Left cardiac atrium (tissue), 4 donors: ENCODE measurements at regions of chr1 and their contacts with region 1.

Region 1: GRCh38 chr1:11847667-11848372 is at the start of gene NPPA:
- DNase-seq: peak; percentile 91
- ATAC-seq: peak; percentile 60 to 64
- total RNA-seq, gene NPPA: 22,081 to 58,150 TPM

Region 2: DNA sequence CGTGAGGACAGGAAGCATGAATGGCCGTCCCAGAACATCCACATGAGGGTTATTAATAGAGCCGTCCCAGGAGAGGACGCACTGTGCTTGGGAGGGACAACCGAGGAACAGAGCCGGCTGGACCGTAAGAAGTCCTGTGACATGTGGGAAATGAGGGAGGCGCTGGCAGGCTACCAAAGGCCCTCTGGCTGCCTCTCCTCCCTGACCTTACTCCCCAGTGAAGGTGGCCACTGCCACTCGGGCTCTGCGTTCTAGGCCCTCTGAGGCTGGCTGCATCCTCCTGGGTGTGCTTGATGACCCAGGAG is 26.4 kb after region 1 on chr1:
- intact Hi-C with region 1: loop called in 1 of 2 experiments (anchors 1 kb)
- DNase-seq: peak; percentile 88
- ATAC-seq: peak; percentile 92 to 93

Region 3: GRCh38 chr1:11886986-11887665 is 39.3 kb after region 1 on chr1:
- intact Hi-C with region 1: loop called in 1 of 2 experiments (anchors 2 kb)
- DNase-seq: peak; percentile 85
- ATAC-seq: peak; percentile 79 to 85